Posterior vena cava (tissue), 2 donors: ENCODE measurements at regions of chr1 and their contacts with region 1.

Region 1: GRCh38 chr1:184453489-184453888 is 66.7 kb downstream of the C1orf21 start:
- DNase-seq: no peak

Region 2: GRCh38 chr1:184437291-184437690 is 16.2 kb before region 1 on chr1:
- intact Hi-C with region 1: loop called in 1 of 2 experiments (anchors 2 kb)
- DNase-seq: no peak